IMR-90 (cell line): ENCODE measurements at regions of chr1 and their contacts with region 1.

Region 1: GRCh38 chr1:245156081-245156735 is 1.4 kb downstream of the KIF26B start:
- DNase-seq: peak; percentile 65
- ATAC-seq: peak; percentile 86
- H3K4me3 ChIP-seq: peak overlapping the region; percentile 86
- H3K27ac ChIP-seq: peak overlapping the region; percentile 4; the same call in 1 of the 2 replicates
- H3K4me1 ChIP-seq: no peaks in the 10 kb centered on the region
- H3K27me3 ChIP-seq: no peaks in the 10 kb centered on the region
- CTCF ChIP-seq: peak; percentile 77
- POLR2A ChIP-seq: no peak
- RAD21 ChIP-seq: peak; percentile 74

Region 2: GRCh38 chr1:245129319-245130240 is 26.6 kb before region 1 on chr1:
- CTCF ChIA-PET with region 1: no interaction called
- POLR2A ChIA-PET with region 1: no interaction called
- dilution Hi-C with region 1: no loop called
- in situ Hi-C with region 1: no loop called
- intact Hi-C with region 1: no loop called
- DNase-seq: peak; percentile 8
- ATAC-seq: no peak; the same call in 1 of the 2 replicates
- H3K4me3 ChIP-seq: no peak overlapping the region
- H3K27ac ChIP-seq: no peak overlapping the region
- H3K4me1 ChIP-seq: no peaks in the 10 kb centered on the region
- H3K27me3 ChIP-seq: peaks cover 5% of the 10 kb centered on the region; the same call in 1 of the 2 replicates
- CTCF ChIP-seq: no peak
- POLR2A ChIP-seq: no peak
- RAD21 ChIP-seq: no peak

Region 3: DNA sequence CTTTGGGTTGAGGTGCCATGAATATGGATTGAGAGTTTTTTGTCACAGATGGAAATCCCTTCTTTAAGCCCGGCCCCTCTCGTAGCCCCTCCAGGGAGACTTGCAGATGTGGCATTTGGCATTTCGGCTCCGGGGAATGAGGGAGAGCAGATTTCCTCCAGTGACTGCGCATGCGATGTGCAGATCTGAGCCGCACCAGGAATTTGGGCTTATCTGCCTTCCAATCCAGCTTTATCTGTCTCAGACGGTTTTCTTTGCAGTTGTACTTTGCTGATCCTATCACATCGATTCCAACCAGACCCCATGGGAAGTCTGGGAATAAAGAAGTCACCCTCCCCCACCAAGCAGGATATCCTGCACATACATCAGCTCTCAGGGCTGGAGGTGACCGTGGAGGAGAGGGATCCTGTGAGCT is 10.3 kb after region 1 on chr1:
- CTCF ChIA-PET with region 1: interaction called, 12 read pairs
- POLR2A ChIA-PET with region 1: no interaction called
- dilution Hi-C with region 1: no loop called
- in situ Hi-C with region 1: no loop called
- intact Hi-C with region 1: no loop called
- DNase-seq: peak; percentile 17
- ATAC-seq: peak; percentile 80
- H3K4me3 ChIP-seq: peak overlapping the region; percentile 30
- H3K27ac ChIP-seq: no peak overlapping the region
- H3K4me1 ChIP-seq: no peaks in the 10 kb centered on the region
- H3K27me3 ChIP-seq: no peaks in the 10 kb centered on the region
- CTCF ChIP-seq: no peak
- POLR2A ChIP-seq: no peak
- RAD21 ChIP-seq: no peak

Region 4: GRCh38 chr1:245599371-245600174 is 443.4 kb after region 1 on chr1:
- CTCF ChIA-PET with region 1: no interaction called
- POLR2A ChIA-PET with region 1: no interaction called
- dilution Hi-C with region 1: no loop called
- in situ Hi-C with region 1: no loop called
- intact Hi-C with region 1: loop called (anchors 2 kb)
- DNase-seq: peak; percentile 94
- ATAC-seq: peak; percentile 95
- H3K4me3 ChIP-seq: no peak overlapping the region
- H3K27ac ChIP-seq: peak overlapping the region; percentile 89; the same call in 1 of the 2 replicates
- H3K4me1 ChIP-seq: peaks cover 11% of the 10 kb centered on the region
- H3K27me3 ChIP-seq: no peaks in the 10 kb centered on the region
- CTCF ChIP-seq: no peak
- POLR2A ChIP-seq: no peak
- RAD21 ChIP-seq: no peak

Region 5: GRCh38 chr1:245874942-245875580 is 718.9 kb after region 1 on chr1:
- CTCF ChIA-PET with region 1: no interaction called
- POLR2A ChIA-PET with region 1: no interaction called
- dilution Hi-C with region 1: no loop called
- in situ Hi-C with region 1: no loop called
- intact Hi-C with region 1: loop called (anchors 5 kb)
- DNase-seq: peak; percentile 100
- ATAC-seq: peak; percentile 74
- H3K4me3 ChIP-seq: no peak overlapping the region
- H3K27ac ChIP-seq: peak overlapping the region; percentile 91
- H3K4me1 ChIP-seq: peaks cover 45% of the 10 kb centered on the region
- H3K27me3 ChIP-seq: no peaks in the 10 kb centered on the region
- CTCF ChIP-seq: no peak
- POLR2A ChIP-seq: no peak
- RAD21 ChIP-seq: peak; percentile 3; the same call in 1 of the 2 replicates

Region 6: GRCh38 chr1:246280551-246280950 is 1124.3 kb after region 1 on chr1:
- CTCF ChIA-PET with region 1: interaction called, 3 read pairs
- POLR2A ChIA-PET with region 1: no interaction called
- dilution Hi-C with region 1: no loop called
- in situ Hi-C with region 1: loop called (anchors 10 kb)
- intact Hi-C with region 1: loop called (anchors 1 kb)
- DNase-seq: peak; percentile 60
- ATAC-seq: peak; percentile 66; the same call in 1 of the 2 replicates
- H3K4me3 ChIP-seq: no peak overlapping the region
- H3K27ac ChIP-seq: no peak overlapping the region
- H3K4me1 ChIP-seq: peaks cover 3% of the 10 kb centered on the region; the same call in 1 of the 2 replicates
- H3K27me3 ChIP-seq: no peaks in the 10 kb centered on the region
- CTCF ChIP-seq: peak; percentile 56
- POLR2A ChIP-seq: no peak
- RAD21 ChIP-seq: peak; percentile 58

Region 7: DNA sequence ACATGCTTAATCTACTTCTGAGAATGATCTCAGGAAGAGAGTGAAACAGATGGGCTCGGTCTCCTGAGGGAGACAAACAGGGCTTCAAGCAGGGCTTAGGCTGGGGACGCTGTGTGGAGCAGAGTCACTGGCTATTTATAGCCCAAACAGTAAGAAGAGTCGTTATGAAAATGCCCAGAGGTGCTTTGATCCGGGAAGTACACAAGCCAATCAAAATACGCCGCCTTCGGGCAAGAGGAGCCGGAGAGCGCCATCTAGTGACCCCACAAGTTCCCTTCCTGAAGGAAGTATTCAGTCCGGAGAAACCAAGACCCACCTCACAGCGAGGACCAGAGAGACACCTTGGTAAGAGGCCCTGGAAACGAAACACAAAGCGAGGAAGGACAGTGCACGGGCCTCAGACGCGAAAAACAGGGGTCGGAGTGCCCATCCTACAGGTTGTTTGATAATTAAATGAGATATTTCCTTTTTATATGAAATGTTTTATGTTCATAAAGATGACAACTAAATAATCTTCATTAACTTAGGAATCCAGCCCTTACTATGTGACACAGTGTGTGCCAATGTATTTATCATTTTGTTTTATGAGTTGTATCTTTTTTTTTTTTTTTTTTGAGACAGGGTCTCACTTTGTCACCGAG is 1543.0 kb after region 1 on chr1:
- CTCF ChIA-PET with region 1: no interaction called
- POLR2A ChIA-PET with region 1: no interaction called
- dilution Hi-C with region 1: no loop called
- in situ Hi-C with region 1: loop called (anchors 25 kb)
- intact Hi-C with region 1: no loop called
- DNase-seq: peak; percentile 96
- ATAC-seq: peak; percentile 95
- H3K4me3 ChIP-seq: peak overlapping the region; percentile 15; the same call in 1 of the 2 replicates
- H3K27ac ChIP-seq: peak overlapping the region; percentile 33; the same call in 1 of the 2 replicates
- H3K4me1 ChIP-seq: no peaks in the 10 kb centered on the region
- H3K27me3 ChIP-seq: no peaks in the 10 kb centered on the region
- CTCF ChIP-seq: peak; percentile 97
- POLR2A ChIP-seq: peak; percentile 32; the same call in 1 of the 2 replicates
- RAD21 ChIP-seq: peak; percentile 82